ENCODE measurements at regions of chr22 and their contacts with region 1.

Region 1: DNA sequence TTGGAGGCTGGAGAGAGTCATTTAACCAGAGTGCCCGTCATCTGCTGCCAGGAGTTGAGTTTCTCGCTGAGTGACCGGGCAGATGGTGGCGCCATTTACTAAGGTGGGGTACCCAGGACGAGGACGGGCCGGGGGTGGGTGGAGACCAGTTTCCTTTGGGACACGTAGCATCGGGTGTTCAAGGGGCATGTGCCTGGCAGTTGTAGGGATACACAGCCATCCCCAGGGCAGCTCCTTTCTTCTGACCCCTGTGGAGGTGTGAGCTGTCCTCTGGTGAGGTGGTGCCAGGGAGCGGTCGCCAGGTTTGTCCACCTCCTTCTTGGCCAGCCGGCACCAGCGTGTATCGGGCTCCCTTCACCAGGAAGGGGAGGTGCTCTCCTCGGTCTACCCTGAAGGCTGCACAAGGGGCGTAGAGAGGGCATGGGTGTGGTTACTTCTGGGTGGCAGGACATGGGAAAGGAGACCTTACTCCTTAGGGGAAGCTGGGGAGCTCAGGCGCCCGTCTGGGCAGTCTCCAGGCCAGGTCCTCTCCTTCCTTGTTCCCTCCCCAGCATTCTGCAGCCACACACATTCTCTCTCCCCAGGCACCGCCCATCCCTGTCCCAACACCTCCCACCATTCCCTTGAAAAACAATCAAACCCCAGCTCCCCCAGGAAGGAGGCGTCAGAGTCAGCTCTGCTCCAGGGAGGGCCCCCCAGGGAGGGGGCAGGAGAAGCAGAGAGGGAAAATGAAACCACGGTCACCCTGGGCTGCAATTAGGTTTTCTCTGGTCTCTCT is 10.3 kb upstream of the MB start:
- DNase-seq: peak; percentile 94 to 98
- H3K4me3 ChIP-seq: peak overlapping the region; percentile 49; the same call in 1 of the 2 replicates
- H3K27ac ChIP-seq: peak overlapping the region; percentile 98
- H3K4me1 ChIP-seq: peaks cover 51% of the 10 kb centered on the region
- H3K27me3 ChIP-seq: no peaks in the 10 kb centered on the region
- CTCF ChIP-seq: peak; percentile 67

Region 2: DNA sequence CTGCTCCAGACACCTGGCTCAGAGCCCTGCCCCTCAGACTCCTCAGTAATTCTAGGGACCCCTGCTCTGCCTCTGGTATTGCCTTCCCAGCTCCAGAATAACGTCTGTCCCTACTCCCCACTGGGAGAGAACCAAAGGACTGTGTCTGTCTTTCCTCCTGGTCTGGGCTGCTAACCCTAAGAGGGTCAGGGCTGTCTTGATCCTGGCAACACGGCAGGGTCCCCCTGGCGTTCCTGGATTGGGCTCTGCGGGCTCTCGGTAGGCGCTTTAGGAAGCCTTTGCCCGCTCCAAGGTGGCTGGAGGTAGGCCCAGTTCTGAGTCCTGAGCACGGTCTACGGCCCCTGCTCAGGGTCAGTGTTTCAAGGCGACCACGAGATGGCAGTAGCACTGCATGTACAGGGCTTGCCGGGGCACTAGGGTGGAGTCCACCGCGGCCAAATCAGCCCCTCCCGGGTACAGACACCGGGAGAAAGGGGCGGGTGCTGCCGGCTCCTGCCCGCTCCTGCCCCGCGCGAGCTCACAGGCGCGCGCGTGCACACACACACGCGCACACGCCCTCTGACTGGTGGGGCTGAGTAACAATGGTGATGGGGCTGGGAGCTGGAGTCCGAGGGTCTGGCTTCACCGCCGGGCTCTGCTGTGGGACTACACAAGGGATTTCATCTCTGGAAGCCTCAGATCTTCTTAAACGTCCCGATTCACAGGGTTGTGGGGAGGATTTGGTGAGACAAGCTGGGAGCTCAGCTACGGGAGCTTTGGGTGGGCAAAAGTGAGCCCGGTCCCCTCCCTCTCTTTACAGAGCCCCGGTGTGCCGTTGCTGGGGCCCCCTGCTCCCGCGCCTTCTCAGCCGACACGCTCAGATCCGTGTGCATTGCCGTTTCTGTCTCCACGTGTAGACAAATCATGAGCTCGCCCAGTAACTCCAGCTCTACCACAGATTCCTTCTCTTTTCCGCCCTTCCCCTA is 276.6 kb before region 1 on chr22:
- CTCF ChIA-PET with region 1: interaction called, 9 read pairs
- POLR2A ChIA-PET with region 1: interaction called, 9 read pairs
- intact Hi-C with region 1: loop called (anchors 1 kb)
- DNase-seq: peak; percentile 75 to 92
- H3K4me3 ChIP-seq: peak overlapping the region; percentile 67
- H3K27ac ChIP-seq: peak overlapping the region; percentile 33
- H3K4me1 ChIP-seq: peaks cover 12% of the 10 kb centered on the region
- H3K27me3 ChIP-seq: no peaks in the 10 kb centered on the region
- CTCF ChIP-seq: peak; percentile 83

Region 3: GRCh38 chr22:35648066-35649025 is 20.9 kb after region 1 on chr22 and contains the start of gene APOL6:
- CTCF ChIA-PET with region 1: interaction called, 9 read pairs
- POLR2A ChIA-PET with region 1: interaction called, 23 read pairs
- intact Hi-C with region 1: loop called (anchors 1 kb)
- DNase-seq: peak; percentile 48 to 88
- H3K4me3 ChIP-seq: peak within 1 kb of the TSS; percentile 80
- H3K27ac ChIP-seq: peak within 1 kb of the TSS; percentile 97
- H3K4me1 ChIP-seq: peaks cover 49% of the 10 kb centered on the region
- H3K27me3 ChIP-seq: no peaks in the 10 kb centered on the region
- CTCF ChIP-seq: no peak
- total RNA-seq, gene APOL6: 16.7 and 18.6 TPM in 2 replicates

Region 4: DNA sequence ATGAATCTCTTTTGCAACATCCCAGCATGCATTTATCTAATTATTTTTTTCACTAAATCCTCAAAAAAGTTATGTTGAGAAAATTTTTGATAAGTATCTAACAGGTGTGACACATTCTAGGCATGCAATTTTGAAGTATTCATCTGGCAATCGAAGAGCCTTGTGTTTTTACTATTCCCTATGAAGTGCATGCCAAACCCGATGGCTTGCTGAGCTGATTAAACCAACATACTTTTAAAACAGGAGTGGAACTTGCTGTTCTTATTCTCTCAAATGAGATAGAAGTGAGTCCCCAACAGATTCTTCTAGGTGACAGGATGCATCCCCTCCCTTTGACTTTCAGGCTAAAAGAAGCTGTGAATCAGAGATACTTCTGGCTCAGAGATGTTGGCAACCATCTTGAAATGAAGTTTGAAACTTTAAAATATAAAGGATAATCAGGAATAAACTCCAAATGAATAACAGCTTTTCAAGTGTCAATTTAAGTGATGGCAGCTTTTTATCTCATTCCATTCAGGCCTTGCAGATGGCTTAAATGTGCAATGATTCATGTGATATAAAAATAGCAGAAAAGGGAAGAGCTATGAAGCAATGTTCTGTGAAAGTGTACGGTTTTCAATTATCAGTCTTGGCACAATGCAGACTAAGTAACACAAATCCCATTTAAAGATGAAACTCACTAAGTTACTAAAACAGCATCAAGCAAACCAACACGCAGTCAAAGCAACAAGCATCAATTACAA is 157.9 kb after region 1 on chr22:
- CTCF ChIA-PET with region 1: no interaction called
- POLR2A ChIA-PET with region 1: interaction called, 3 read pairs
- intact Hi-C with region 1: loop called (anchors 1 kb)
- DNase-seq: no peak
- H3K4me3 ChIP-seq: no peak overlapping the region
- H3K27ac ChIP-seq: peak overlapping the region; percentile 94
- H3K4me1 ChIP-seq: peaks cover 34% of the 10 kb centered on the region
- H3K27me3 ChIP-seq: no peaks in the 10 kb centered on the region
- CTCF ChIP-seq: no peak

Region 5: DNA sequence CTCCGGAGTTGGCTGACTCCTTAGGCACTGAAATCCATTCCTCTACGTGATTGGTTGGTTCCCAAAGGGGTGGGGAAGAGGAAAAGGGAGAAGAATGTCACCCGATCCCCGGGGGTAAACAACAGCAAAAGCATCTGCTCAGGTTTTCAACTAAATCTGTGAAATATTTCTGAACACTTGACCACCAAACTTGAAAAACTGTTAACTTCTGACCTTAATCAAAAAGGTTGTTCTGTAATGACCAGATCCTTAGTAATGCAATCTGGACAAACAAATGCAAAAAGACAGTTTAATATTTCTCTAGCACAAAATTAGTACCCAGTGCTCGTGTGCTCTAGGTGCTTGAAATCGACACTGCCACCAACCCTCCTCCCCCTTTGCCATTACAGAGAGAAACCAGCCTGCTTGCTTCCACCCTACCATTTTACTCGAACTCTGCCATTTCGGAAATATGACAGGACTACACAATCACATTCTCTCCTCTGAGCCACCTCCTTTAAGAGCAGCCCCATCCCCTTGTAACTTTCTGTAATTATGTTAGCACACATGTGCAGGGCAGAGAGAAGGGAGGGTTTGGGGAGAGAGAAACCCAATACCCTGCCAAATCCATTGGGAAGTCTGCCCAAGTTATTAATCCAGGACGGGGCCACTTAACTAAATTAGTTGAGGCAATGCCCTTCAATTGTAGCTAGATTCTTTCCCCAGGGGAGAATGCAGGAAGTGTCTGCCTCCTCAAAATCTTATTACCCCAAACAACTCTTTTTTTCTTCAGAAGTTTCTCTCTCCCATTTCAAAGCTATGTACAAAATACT is 287.4 kb after region 1 on chr22:
- CTCF ChIA-PET with region 1: no interaction called
- POLR2A ChIA-PET with region 1: interaction called, 11 read pairs
- intact Hi-C with region 1: no loop called
- DNase-seq: peak; percentile 67 to 94
- H3K4me3 ChIP-seq: peak overlapping the region; percentile 46
- H3K27ac ChIP-seq: peak overlapping the region; percentile 80
- H3K4me1 ChIP-seq: peaks cover 58% of the 10 kb centered on the region
- H3K27me3 ChIP-seq: no peaks in the 10 kb centered on the region
- CTCF ChIP-seq: no peak

Region 6: DNA sequence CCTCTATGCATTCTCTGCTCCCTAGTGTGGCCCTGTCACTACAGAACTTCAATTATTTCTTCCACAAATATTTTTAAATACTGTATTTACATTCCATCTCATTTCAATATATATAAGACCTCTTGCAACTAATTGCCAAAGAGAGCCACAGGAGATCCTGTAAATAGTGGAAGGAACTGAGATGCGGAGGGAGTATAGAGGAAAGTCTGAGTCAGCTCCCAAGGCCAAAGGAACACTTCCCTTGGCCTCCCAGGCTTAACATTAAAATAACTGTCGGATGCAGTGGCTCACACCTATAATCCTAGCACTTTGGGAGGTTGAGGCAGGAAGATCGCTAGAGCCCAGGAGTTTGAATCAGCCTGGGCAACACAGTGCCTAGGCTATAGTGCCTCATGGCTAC is 370.0 kb after region 1 on chr22:
- CTCF ChIA-PET with region 1: no interaction called
- POLR2A ChIA-PET with region 1: no interaction called
- intact Hi-C with region 1: no loop called
- DNase-seq: no peak
- H3K4me3 ChIP-seq: no peak overlapping the region
- H3K27ac ChIP-seq: no peak overlapping the region
- H3K4me1 ChIP-seq: 0 out of 2 replicates have a peak, but pooled peaks cover 3% of the 10 kb centered on the region
- H3K27me3 ChIP-seq: no peaks in the 10 kb centered on the region
- CTCF ChIP-seq: no peak

Region 7: DNA sequence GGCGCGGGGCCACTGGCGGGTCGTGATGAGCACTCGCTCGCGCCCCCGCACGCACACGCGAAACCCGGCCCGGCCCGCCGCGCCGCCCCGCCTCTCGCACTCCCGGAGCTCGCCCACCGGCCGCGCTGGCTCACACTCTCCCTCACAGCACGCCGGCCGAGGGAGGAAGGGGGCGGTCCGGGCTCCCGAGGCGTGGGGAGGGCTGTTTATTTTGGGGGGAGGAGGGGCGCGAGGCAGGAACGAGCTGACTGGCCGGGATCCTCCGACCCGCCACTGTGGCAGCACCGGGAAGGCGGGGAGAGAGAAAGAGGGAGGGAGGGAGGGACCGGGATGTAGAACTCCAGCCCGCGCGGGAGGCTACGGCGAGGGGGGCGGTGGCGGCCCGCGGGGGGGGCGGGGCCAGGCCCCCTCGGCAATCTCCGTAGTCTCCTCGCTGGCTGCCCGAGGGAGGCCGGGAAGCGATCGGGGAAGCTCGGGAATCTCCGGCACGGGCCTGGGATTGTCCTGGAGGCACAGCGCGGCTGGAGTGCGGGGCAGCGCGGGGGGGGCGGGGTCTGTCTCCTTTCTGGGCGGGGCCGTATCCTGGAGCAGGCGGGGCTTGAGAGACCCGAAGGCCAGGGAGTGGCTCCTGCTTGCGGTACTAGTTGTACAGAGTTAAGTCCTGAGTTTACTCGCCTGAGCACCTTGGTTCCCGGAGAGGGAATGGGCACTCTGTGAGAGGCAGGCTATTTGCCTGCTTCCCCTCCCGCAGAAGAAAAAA is 401.4 kb after region 1 on chr22 and contains the start of gene RBFOX2:
- CTCF ChIA-PET with region 1: no interaction called
- POLR2A ChIA-PET with region 1: interaction called, 3 read pairs
- intact Hi-C with region 1: loop called (anchors 1 kb)
- DNase-seq: peak; percentile 91 to 99
- H3K4me3 ChIP-seq: peak within 1 kb of the TSS; percentile 74
- H3K27ac ChIP-seq: peak within 1 kb of the TSS; percentile 29
- H3K4me1 ChIP-seq: peaks cover 22% of the 10 kb centered on the region
- H3K27me3 ChIP-seq: no peaks in the 10 kb centered on the region
- CTCF ChIP-seq: no peak
- total RNA-seq, gene RBFOX2: 81.7 and 109 TPM in 2 replicates

Region 8: DNA sequence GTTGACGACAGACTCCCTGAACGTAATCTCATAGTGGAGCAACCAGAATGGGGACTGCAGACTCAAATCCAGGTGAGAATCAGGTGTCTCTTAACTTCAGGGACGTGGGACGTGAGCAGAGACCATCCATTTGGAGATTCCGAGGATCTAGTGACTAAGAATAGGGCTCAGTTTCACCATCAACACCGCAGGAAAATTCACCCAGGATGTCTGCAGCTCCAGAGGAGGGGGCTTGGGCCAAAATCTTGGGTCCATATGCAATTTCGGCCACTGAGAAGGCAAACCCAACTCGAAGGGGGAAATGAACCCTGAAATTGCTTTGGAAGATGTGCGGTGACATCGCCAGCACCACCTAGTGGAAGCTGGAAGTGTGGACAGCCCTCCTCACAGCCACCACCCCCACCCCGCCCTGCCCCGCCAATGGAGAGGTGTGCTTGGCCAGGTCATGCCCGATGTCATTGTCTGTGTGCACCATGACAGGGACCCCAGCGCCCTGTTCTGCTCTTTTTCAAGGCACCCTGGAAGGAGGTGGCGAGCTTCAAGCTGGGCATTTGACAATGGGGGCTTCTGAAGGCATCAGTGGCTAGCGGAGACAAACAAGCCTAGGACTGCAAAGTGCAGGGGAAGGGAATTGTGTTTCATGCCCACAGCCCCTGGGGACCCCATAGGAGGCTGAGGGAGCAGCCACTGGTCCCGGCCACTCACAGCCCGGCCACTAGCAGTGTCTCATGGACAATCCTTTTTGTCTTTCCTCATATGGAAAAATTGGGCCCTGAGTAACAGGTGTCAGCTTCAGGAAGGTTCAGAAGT is 650.2 kb after region 1 on chr22:
- CTCF ChIA-PET with region 1: no interaction called
- POLR2A ChIA-PET with region 1: no interaction called
- intact Hi-C with region 1: loop called (anchors 10 kb)
- DNase-seq: peak; percentile 59 to 62
- H3K4me3 ChIP-seq: no peak overlapping the region
- H3K27ac ChIP-seq: no peak overlapping the region
- H3K4me1 ChIP-seq: no peaks in the 10 kb centered on the region
- H3K27me3 ChIP-seq: no peaks in the 10 kb centered on the region
- CTCF ChIP-seq: peak; percentile 91